ENCODE measurements at regions of chr21 and their contacts with region 1.

Region 1: DNA sequence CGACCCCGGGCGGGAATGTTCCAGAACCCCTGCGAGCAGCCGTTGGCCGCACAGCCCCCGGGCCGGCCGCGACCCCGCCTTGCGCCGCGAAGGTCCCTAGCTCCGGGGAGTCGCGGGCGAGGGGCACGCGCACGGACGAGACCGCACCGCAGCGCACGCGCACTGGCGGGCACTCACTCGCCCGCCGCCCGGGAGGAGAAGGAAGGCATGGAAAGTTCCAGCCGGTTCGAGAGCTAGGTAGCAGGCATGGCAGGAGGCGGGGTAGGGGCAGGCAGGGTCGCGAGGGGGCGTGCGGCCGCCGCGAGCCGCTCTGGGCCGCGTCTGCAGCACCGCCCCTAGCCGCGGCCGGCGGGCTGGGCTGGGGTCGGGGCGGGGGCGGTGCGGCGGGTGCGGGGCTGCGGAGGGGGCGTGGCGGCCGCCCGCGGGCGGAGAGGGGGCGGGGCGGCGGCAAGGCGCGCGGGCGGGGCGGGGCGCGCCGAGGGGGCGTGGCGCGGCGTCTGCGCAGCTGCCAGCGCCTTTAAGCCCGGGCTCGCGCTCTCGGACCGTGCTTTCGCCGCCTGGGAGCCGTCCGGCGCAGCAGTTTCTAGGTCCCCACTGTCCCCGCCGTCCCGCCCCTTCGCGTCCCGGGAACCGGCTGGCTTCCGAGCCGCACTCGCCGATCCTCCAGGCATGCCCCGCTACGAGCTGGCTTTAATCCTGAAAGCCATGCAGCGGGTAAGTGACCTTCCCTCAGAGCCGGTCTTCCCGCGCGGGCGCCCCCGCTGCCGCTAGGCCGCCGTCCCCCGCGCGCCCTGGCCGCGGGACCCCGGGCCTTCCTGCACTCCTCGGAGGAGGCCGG is at the starts of genes MRPS6 and SLC5A3:
- DNase-seq: peak; percentile 47
- ATAC-seq: peak; percentile 84
- H3K4me3 ChIP-seq: peak within 1 kb of the TSS; percentile 76 to 84 (median 78)
- H3K27ac ChIP-seq: peak within 1 kb of the TSS; percentile 74
- H3K4me1 ChIP-seq: peaks cover 46% of the 10 kb centered on the region
- H3K27me3 ChIP-seq: 0 out of 5 replicates have a peak, but pooled peaks cover 0 to 4% of the 10 kb centered on the region in 2 experiments
- CTCF ChIP-seq: peak; percentile 73
- EP300 ChIP-seq: no peak
- POLR2A ChIP-seq: peak; percentile 94 to 99
- RAD21 ChIP-seq: peak; percentile 32; the same call in 1 of the 2 replicates
- total RNA-seq, gene MRPS6: 26.9 and 35.5 TPM in 2 replicates
- total RNA-seq, gene SLC5A3: 10.1 and 11.2 TPM in 2 replicates

Region 2: GRCh38 chr21:33703750-33704606 is 369.3 kb before region 1 on chr21:
- CTCF ChIA-PET with region 1: no interaction called
- POLR2A ChIA-PET with region 1: no interaction called
- in situ Hi-C with region 1: no loop called
- intact Hi-C with region 1: no loop called
- DNase-seq: no peak
- ATAC-seq: peak; percentile 80
- H3K4me3 ChIP-seq: no peak overlapping the region
- H3K27ac ChIP-seq: peak overlapping the region; percentile 47
- H3K4me1 ChIP-seq: peaks cover 14% of the 10 kb centered on the region
- H3K27me3 ChIP-seq: no peaks in the 10 kb centered on the region
- CTCF ChIP-seq: no peak
- EP300 ChIP-seq: no peak
- POLR2A ChIP-seq: no peak
- RAD21 ChIP-seq: no peak

Region 3: GRCh38 chr21:34202553-34203372 is 129.5 kb after region 1 on chr21:
- CTCF ChIA-PET with region 1: no interaction called
- POLR2A ChIA-PET with region 1: interaction called, 4 read pairs
- in situ Hi-C with region 1: loop called (anchors 10 kb)
- intact Hi-C with region 1: loop called (anchors 2 kb)
- DNase-seq: no peak
- ATAC-seq: peak; percentile 42
- H3K4me3 ChIP-seq: peak overlapping the region; percentile 47 to 77 (median 61); a peak in 4 of 6 replicates
- H3K27ac ChIP-seq: peak overlapping the region; percentile 70
- H3K4me1 ChIP-seq: peaks cover 52% of the 10 kb centered on the region
- H3K27me3 ChIP-seq: no peaks in the 10 kb centered on the region
- CTCF ChIP-seq: no peak
- EP300 ChIP-seq: no peak
- POLR2A ChIP-seq: no peak
- RAD21 ChIP-seq: no peak

Region 4: DNA sequence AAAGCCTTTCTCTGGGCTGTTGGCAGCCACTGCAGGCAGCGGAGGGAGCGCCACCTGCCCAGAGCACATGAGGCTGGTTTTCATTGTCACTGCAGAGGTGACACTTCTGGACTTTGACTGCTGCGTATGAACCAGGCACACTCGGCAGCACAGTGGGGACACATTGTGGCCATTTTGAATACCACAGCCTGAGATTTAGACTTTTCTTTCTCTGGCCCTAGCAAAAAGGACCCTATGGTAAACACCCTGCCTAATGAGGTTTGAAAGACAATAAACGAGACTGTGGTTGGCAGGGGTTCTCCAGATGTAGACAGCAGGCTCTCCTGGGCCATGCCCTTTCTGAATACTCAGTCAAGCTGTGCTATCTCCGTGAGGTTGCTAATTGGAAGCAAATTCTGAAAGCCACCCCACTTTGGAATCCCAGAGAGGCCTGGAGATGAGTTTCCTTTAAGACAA is 278.6 kb after region 1 on chr21:
- CTCF ChIA-PET with region 1: no interaction called
- POLR2A ChIA-PET with region 1: no interaction called
- in situ Hi-C with region 1: no loop called
- intact Hi-C with region 1: loop called (anchors 2 kb)
- DNase-seq: peak; percentile 80
- ATAC-seq: peak; percentile 99
- H3K4me3 ChIP-seq: no peak overlapping the region
- H3K27ac ChIP-seq: no peak overlapping the region
- H3K4me1 ChIP-seq: peaks cover 22% of the 10 kb centered on the region; the same call in 1 of the 2 replicates
- H3K27me3 ChIP-seq: peaks cover 0 to 4% of the 10 kb centered on the region in 2 experiments; a peak in 2 of 5 replicates
- CTCF ChIP-seq: peak; percentile 93
- EP300 ChIP-seq: no peak
- POLR2A ChIP-seq: no peak
- RAD21 ChIP-seq: peak; percentile 84